Heart left ventricle (tissue), 16 donors: ENCODE measurements at regions of chr6 and their contacts with region 1.

Region 1: GRCh38 chr6:91081452-91082067 is 494.7 kb upstream of the MAP3K7 start:
- DNase-seq: no peak
- ATAC-seq: peak in 1 of 4 donors; percentile 47
- H3K4me3 ChIP-seq: no peak overlapping the region
- H3K27ac ChIP-seq: no peak overlapping the region
- H3K4me1 ChIP-seq: no peaks in the 10 kb centered on the region
- H3K27me3 ChIP-seq: no peaks in the 10 kb centered on the region
- CTCF ChIP-seq: peak; percentile 54 to 77 (median 61)
- POLR2A ChIP-seq: no peak

Region 2: DNA sequence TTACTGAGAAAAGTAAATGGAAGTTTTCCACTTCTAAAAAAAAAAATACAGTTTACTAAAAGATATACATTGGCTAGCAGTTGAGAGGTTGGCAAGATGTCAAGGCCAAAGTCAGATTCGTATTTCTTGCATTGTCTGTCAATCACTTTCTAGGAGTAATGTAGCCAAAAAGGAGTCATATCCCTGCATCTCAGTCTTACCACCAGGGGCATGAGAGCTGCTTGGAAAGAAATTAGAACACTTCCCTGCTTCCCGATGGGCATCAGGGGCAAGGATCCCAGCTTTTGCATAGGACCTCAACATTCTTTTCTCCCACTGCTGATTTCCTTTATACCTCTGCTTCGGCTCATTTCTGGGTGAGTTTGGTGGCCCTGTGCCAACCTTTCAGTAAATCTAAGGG is 86.3 kb after region 1 on chr6:
- intact Hi-C with region 1: no loop called
- DNase-seq: no peak
- ATAC-seq: no peak
- H3K4me3 ChIP-seq: no peak overlapping the region
- H3K27ac ChIP-seq: no peak overlapping the region
- H3K4me1 ChIP-seq: no peaks in the 10 kb centered on the region
- H3K27me3 ChIP-seq: peaks cover 0 to 9% (median 0%) of the 10 kb centered on the region in 9 donors
- CTCF ChIP-seq: peak in 1 of 12 donors; percentile 14
- POLR2A ChIP-seq: no peak

Region 3: DNA sequence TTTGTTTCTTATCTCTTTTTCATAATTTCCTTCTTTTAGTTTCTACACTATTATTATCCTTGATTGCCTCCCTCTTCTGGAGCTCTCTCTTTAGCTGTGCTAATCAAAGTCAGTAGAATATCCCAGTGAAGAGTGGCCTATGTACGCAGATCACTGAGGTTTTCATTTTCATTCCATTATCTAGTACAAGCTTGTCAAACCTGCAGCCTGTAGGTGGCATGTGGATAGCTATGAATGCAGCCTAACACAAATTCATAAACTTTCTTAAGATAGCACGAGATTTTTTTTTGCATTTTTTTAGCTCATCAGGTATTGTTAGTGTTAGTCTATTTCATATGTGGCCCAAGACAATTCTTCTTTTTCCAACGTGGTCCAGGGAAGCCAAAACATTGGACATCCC is 331.0 kb after region 1 on chr6:
- intact Hi-C with region 1: no loop called
- DNase-seq: no peak
- ATAC-seq: no peak
- H3K4me3 ChIP-seq: no peak overlapping the region
- H3K27ac ChIP-seq: no peak overlapping the region
- H3K4me1 ChIP-seq: no peaks in the 10 kb centered on the region
- H3K27me3 ChIP-seq: no peaks in the 10 kb centered on the region
- CTCF ChIP-seq: no peak
- POLR2A ChIP-seq: no peak

Region 4: DNA sequence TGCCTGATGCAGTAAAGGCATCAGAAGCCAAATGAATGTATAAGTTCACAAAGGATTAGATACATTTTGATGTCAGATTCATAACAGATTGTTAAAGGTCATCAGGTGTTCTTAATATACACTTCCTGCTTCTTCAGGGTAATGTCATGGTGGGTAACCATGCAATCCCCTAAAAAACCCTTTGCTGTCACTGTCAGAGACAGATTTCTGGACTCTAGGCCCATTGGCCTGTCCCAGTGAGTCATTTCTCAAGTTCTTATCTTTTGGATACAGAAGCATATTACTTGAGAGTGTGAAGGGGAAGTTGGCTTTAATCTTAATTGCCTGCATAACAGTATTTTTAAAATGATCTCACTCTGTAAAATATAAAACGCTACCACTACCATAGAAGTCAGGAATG is 400.9 kb after region 1 on chr6:
- intact Hi-C with region 1: loop called in 1 of 10 experiments (anchors 10 kb)
- DNase-seq: no peak
- ATAC-seq: peak in 1 of 4 donors; percentile 54
- H3K4me3 ChIP-seq: no peak overlapping the region
- H3K27ac ChIP-seq: no peak overlapping the region
- H3K4me1 ChIP-seq: peaks cover 0 to 16% (median 4%) of the 10 kb centered on the region in 12 donors
- H3K27me3 ChIP-seq: no peaks in the 10 kb centered on the region
- CTCF ChIP-seq: no peak
- POLR2A ChIP-seq: no peak